A549 (cell line): ENCODE measurements at regions of chr7 and their contacts with region 1.

Region 1: DNA sequence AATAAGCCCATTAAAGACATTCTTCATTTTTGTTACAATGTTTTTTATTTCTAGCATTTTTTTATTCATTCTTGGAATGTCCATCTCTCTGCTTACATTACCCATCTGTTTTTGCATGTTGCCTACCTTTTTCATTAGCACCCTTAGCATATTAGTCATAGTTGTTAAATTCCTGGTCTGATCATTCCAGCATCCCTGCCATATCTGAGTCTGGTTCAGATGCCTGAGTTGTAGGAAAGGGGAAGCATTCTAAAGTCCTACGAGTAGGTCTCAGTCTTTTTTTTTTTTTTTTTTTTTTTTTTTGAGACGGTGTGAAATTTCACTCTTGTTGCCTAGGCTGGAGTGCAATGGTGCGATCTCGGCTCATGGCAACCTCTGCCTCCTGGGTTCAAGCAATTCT is 19.7 kb upstream of the NRF1 start:
- DNase-seq: no peak
- ATAC-seq: no peak
- H3K4me3 ChIP-seq: no peak overlapping the region
- H3K27ac ChIP-seq: no peak overlapping the region
- H3K4me1 ChIP-seq: peaks cover 45% of the 10 kb centered on the region
- CTCF ChIP-seq: no peak
- EP300 ChIP-seq: no peak
- POLR2A ChIP-seq: no peak
- RAD21 ChIP-seq: no peak

Region 2: GRCh38 chr7:129604713-129605437 is 13.0 kb after region 1 on chr7:
- CTCF ChIA-PET with region 1: interaction called, 13 read pairs
- POLR2A ChIA-PET with region 1: interaction called, 3 read pairs
- DNase-seq: no peak
- ATAC-seq: peak in 1 of 2 experiments; percentile 21; a peak in 1 of 6 replicates
- H3K4me3 ChIP-seq: no peak overlapping the region
- H3K27ac ChIP-seq: no peak overlapping the region
- H3K4me1 ChIP-seq: peaks cover 9% of the 10 kb centered on the region; the same call in 1 of the 3 replicates
- CTCF ChIP-seq: no peak
- EP300 ChIP-seq: no peak
- POLR2A ChIP-seq: no peak
- RAD21 ChIP-seq: no peak

Region 3: GRCh38 chr7:129739427-129739826 is 147.6 kb after region 1 on chr7:
- CTCF ChIA-PET with region 1: no interaction called
- POLR2A ChIA-PET with region 1: no interaction called
- DNase-seq: no peak
- ATAC-seq: no peak
- H3K4me3 ChIP-seq: no peak overlapping the region
- H3K27ac ChIP-seq: no peak overlapping the region
- H3K4me1 ChIP-seq: no peaks in the 10 kb centered on the region
- CTCF ChIP-seq: no peak
- EP300 ChIP-seq: no peak
- POLR2A ChIP-seq: no peak
- RAD21 ChIP-seq: no peak